WTC11 (cell line): ENCODE measurements at regions of chr1 and their contacts with region 1.

Region 1: DNA sequence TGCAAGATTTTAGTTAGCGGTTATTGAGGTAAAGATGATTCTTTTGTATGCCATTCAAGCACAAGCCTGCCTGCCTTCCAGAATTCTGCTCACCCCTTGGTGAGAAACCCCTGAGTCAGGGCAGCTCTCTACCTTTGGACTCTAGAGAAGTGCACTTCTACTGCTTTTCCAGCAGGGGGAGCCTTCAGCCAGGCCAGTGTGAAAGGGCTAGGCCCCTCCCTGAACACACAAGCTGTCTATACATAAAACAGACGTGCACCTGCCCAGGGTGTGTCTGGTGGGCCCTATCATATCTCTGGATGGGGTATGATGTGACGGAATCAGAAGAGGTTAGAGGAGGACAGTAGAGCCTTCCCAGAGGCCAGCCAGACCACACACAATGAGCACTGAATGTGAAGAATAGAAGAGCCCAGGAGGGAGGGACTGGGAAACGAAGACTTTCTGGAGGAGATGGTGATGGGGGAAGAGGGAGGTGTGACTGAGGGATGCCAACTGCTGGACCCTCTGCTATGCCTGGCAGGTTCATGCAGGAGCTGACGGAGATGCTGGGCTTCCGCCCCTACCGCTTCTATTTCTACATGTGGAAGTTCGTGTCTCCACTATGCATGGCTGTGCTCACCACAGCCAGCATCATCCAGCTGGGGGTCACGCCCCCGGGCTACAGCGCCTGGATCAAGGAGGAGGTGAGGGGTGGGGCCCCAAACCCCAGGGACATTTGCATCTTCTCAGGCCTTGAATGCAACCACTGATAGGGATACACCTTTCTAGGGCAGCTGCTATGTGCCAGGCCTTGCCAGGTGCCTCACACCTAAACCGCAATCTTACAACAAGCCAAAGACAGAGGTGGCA is 13.0 kb upstream of the KCNC4 start:
- DNase-seq: peak; percentile 42
- ATAC-seq: peak; percentile 95
- H3K4me3 Mint-ChIP-seq: no peak overlapping the region
- H3K27ac Mint-ChIP-seq: no peak overlapping the region
- H3K4me1 Mint-ChIP-seq: peaks cover 2% of the 10 kb centered on the region; the same call in 1 of the 2 replicates
- H3K27me3 Mint-ChIP-seq: no peaks in the 10 kb centered on the region
- CTCF ChIP-seq: peak; percentile 87

Region 2: DNA sequence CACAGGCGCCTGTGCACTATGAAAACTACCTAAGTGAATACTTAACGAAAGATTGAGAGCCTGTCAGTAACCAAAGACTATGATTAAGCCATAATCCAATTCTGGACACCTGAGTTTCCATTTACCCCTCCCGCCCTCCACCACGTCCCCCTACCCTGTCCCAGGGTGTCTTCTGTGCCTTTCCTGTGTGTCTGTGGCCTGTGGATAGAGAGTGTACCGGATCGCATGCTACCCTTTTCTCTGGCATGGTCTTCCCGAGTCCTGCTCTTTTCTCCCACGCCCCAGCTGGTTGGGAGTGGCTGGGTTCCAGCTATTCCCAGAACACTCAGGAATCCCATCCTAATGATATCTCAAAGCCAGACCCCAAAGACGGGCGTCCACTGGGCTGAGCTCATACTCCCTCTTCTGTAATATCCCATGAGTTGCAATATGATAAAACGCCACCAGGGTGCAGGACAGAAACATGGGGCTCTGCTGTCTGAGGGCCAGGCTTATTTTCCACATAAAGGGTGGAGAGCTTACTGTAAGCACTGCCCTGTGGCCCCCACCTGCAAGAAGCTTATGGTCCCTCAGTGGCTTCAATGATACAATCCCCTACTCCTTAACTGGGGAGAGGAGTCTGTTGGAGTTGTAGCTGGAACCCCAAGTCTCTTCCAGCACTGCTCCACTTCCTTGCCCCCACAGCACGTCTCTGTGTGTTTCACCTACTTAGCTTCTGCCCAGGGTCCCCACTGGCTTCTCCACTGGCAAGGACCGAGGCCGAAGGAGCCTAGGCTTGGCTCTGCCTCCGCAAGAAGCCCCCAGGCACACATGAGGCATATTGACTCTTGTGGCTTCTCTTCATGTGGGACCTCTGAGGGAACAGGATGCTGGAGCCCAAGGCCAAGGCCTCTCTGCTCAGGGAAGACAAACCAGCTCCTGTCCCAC is 109.1 kb before region 1 on chr1:
- CTCF ChIA-PET with region 1: interaction called, 13 read pairs
- POLR2A ChIA-PET with region 1: no interaction called
- DNase-seq: peak; percentile 60
- ATAC-seq: peak; percentile 76
- H3K4me3 Mint-ChIP-seq: no peak overlapping the region
- H3K27ac Mint-ChIP-seq: no peak overlapping the region
- H3K4me1 Mint-ChIP-seq: peaks cover 33% of the 10 kb centered on the region
- H3K27me3 Mint-ChIP-seq: peaks cover 50% of the 10 kb centered on the region
- CTCF ChIP-seq: peak; percentile 71

Region 3: GRCh38 chr1:110176299-110176956 is 20.7 kb before region 1 on chr1:
- CTCF ChIA-PET with region 1: interaction called, 36 read pairs
- POLR2A ChIA-PET with region 1: no interaction called
- DNase-seq: no peak
- ATAC-seq: no peak
- H3K4me3 Mint-ChIP-seq: no peak overlapping the region
- H3K27ac Mint-ChIP-seq: no peak overlapping the region
- H3K4me1 Mint-ChIP-seq: peaks cover 10% of the 10 kb centered on the region
- H3K27me3 Mint-ChIP-seq: no peaks in the 10 kb centered on the region; the same call in 1 of the 2 replicates
- CTCF ChIP-seq: no peak

Region 4: GRCh38 chr1:110292031-110292741 is 95.0 kb after region 1 on chr1:
- CTCF ChIA-PET with region 1: interaction called, 14 read pairs
- POLR2A ChIA-PET with region 1: no interaction called
- DNase-seq: no peak
- ATAC-seq: no peak
- H3K4me3 Mint-ChIP-seq: no peak overlapping the region
- H3K27ac Mint-ChIP-seq: no peak overlapping the region
- H3K4me1 Mint-ChIP-seq: peaks cover 12% of the 10 kb centered on the region
- H3K27me3 Mint-ChIP-seq: no peaks in the 10 kb centered on the region; the same call in 1 of the 2 replicates
- CTCF ChIP-seq: no peak

Region 5: GRCh38 chr1:110338886-110339406 is 141.8 kb after region 1 on chr1 and contains the start of gene RBM15:
- CTCF ChIA-PET with region 1: interaction called, 23 read pairs
- POLR2A ChIA-PET with region 1: no interaction called
- DNase-seq: peak; percentile 96
- ATAC-seq: peak; percentile 84
- H3K4me3 Mint-ChIP-seq: no peak within 1 kb of the TSS
- H3K27ac Mint-ChIP-seq: no peak within 1 kb of the TSS; the same call in 1 of the 2 replicates
- H3K4me1 Mint-ChIP-seq: peaks cover 52% of the 10 kb centered on the region
- H3K27me3 Mint-ChIP-seq: no peaks in the 10 kb centered on the region
- CTCF ChIP-seq: no peak
- total RNA-seq, gene RBM15: 43.5 to 50.6 TPM (median 44.8 TPM) in 3 replicates

Region 6: GRCh38 chr1:110412576-110412975 is 215.4 kb after region 1 on chr1:
- CTCF ChIA-PET with region 1: interaction called, 15 read pairs
- POLR2A ChIA-PET with region 1: no interaction called
- DNase-seq: peak; percentile 82
- ATAC-seq: peak; percentile 78
- H3K4me3 Mint-ChIP-seq: no peak overlapping the region
- H3K27ac Mint-ChIP-seq: no peak overlapping the region
- H3K4me1 Mint-ChIP-seq: peaks cover 23% of the 10 kb centered on the region
- H3K27me3 Mint-ChIP-seq: peaks cover 2% of the 10 kb centered on the region; the same call in 1 of the 2 replicates
- CTCF ChIP-seq: peak; percentile 55; the same call in 1 of the 2 replicates

Region 7: GRCh38 chr1:110482662-110483307 is 285.6 kb after region 1 on chr1:
- CTCF ChIA-PET with region 1: interaction called, 13 read pairs
- POLR2A ChIA-PET with region 1: no interaction called
- DNase-seq: no peak
- ATAC-seq: peak; percentile 72
- H3K4me3 Mint-ChIP-seq: no peak overlapping the region
- H3K27ac Mint-ChIP-seq: no peak overlapping the region
- H3K4me1 Mint-ChIP-seq: peaks cover 34% of the 10 kb centered on the region
- H3K27me3 Mint-ChIP-seq: no peaks in the 10 kb centered on the region; the same call in 1 of the 2 replicates
- CTCF ChIP-seq: no peak